ENCODE measurements at regions of chr4 and their contacts with region 1.

Region 1: GRCh38 chr4:153142700-153143438 is 61.4 kb upstream of the TRIM2 start:
- DNase-seq: peak in 3 of 4 donors; percentile 70 to 86 (median 70)
- ATAC-seq: peak; percentile 90
- H3K4me3 ChIP-seq: no peak overlapping the region
- H3K27ac ChIP-seq: no peak overlapping the region
- H3K4me1 ChIP-seq: peaks cover 5 to 17% of the 10 kb centered on the region in 2 donors
- H3K27me3 ChIP-seq: no peaks in the 10 kb centered on the region
- CTCF ChIP-seq: peak; percentile 63 to 87

Region 2: GRCh38 chr4:153318696-153319320 is 175.9 kb after region 1 on chr4:
- intact Hi-C with region 1: loop called in 1 of 2 experiments (anchors 5 kb)
- DNase-seq: peak in 2 of 4 donors; percentile 42 to 61
- ATAC-seq: peak; percentile 92
- H3K4me3 ChIP-seq: no peak overlapping the region
- H3K27ac ChIP-seq: no peak overlapping the region
- H3K4me1 ChIP-seq: no peaks in the 10 kb centered on the region
- H3K27me3 ChIP-seq: no peaks in the 10 kb centered on the region
- CTCF ChIP-seq: peak; percentile 56 to 63

Measured in left lung (tissue), 14 donors.